Activated naive CD4-positive, alpha-beta T cell treated with anti-CD3 and anti-CD28 coated beads for 36 hours (primary cell): ENCODE measurements at regions of chr19 and their contacts with region 1.

Region 1: GRCh38 chr19:6199240-6199983 is 63.9 kb downstream of the ACSBG2 start:
- DNase-seq: peak; percentile 99
- H3K4me3 Mint-ChIP-seq: peak overlapping the region; percentile 99
- H3K27ac Mint-ChIP-seq: peak overlapping the region; percentile 79
- H3K4me1 Mint-ChIP-seq: peaks cover 12% of the 10 kb centered on the region
- H3K27me3 Mint-ChIP-seq: no peaks in the 10 kb centered on the region

Region 2: DNA sequence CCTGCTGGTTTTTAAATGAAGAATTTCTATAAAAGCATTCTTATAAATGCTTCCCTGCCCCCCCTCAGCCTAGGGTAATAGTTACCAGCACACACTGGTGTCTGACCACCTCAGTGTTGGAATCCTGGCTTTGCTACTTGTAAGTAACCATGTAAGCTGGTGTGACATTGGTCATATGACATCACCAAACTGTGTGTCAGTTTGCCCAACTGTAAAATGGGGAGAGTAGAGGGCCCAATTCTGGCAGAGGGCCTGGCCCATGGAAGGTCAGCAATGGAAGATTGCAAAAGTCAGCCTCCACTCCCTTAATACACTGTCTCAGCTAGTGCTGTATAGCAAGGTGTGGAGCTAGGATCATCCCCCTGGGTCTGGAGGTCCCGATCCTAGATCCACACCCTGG is 32.3 kb before region 1 on chr19:
- CTCF ChIA-PET with region 1: no interaction called
- intact Hi-C with region 1: loop called (anchors 2 kb)
- DNase-seq: no peak
- H3K4me3 Mint-ChIP-seq: no peak overlapping the region
- H3K27ac Mint-ChIP-seq: no peak overlapping the region
- H3K4me1 Mint-ChIP-seq: no peaks in the 10 kb centered on the region
- H3K27me3 Mint-ChIP-seq: no peaks in the 10 kb centered on the region

Region 3: DNA sequence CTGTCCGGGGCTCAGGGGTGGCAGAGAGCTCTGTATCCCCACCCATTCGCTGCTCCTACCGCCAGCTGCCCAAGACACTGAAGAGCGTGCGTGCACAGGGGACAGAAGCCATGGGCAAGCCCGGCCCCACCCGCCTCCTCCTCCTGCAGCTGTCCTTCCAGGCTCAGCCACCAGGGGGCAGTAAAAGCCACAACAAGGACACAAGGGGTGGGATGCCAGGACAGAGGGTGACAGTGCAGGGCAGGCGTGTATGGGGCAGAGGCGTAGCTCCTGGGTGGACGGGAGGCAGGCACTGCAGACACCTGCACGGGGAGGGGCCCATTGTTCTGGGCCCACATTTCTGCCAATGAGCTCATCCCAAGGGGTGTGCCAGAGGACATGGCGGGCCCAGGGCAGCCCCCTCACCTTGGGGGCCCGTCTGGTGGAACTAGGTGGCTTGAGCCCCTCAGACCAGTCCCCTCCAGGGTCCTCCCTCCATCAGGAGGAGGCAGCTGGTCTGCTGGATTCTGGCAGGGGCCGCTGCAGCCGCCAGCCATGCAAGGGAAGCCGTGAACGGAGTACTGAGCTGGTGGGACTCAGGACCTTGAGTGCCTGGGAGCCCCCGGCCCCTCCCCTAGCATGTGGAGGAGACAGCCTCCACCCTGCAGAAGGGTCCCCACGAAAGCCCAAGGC is 19.2 kb after region 1 on chr19:
- CTCF ChIA-PET with region 1: interaction called, 10 read pairs
- intact Hi-C with region 1: no loop called
- DNase-seq: peak; percentile 91
- H3K4me3 Mint-ChIP-seq: no peak overlapping the region
- H3K27ac Mint-ChIP-seq: no peak overlapping the region
- H3K4me1 Mint-ChIP-seq: no peaks in the 10 kb centered on the region
- H3K27me3 Mint-ChIP-seq: no peaks in the 10 kb centered on the region